ENCODE measurements at regions of chr21 and their contacts with region 1.

Region 1: GRCh38 chr21:39022863-39023693 is 160.2 kb downstream of the PSMG1 start:
- DNase-seq: no peak
- H3K4me3 ChIP-seq: no peak overlapping the region
- H3K27ac ChIP-seq: no peak overlapping the region
- H3K4me1 ChIP-seq: peaks cover 0 to 12% (median 7%) of the 10 kb centered on the region in 4 experiments; a peak in 5 of 7 replicates
- H3K27me3 ChIP-seq: no peaks in the 10 kb centered on the region
- CTCF ChIP-seq: peak; percentile 28 to 62 (median 38); a peak in 3 of 4 replicates
- EP300 ChIP-seq: no peak
- POLR2A ChIP-seq: no peak
- RAD21 ChIP-seq: peak; percentile 37 to 69

Region 2: GRCh38 chr21:38989745-38990423 is 33.2 kb before region 1 on chr21:
- CTCF ChIA-PET with region 1: interaction called, 11 read pairs
- POLR2A ChIA-PET with region 1: interaction called, 3 read pairs
- DNase-seq: no peak
- H3K4me3 ChIP-seq: no peak overlapping the region
- H3K27ac ChIP-seq: no peak overlapping the region
- H3K4me1 ChIP-seq: peaks cover 7 to 29% (median 24%) of the 10 kb centered on the region in 4 experiments
- H3K27me3 ChIP-seq: no peaks in the 10 kb centered on the region
- CTCF ChIP-seq: no peak
- EP300 ChIP-seq: no peak
- POLR2A ChIP-seq: no peak
- RAD21 ChIP-seq: no peak

Region 3: GRCh38 chr21:39010640-39011404 is 12.3 kb before region 1 on chr21:
- CTCF ChIA-PET with region 1: interaction called, 23 read pairs
- POLR2A ChIA-PET with region 1: interaction called, 3 read pairs
- DNase-seq: no peak
- H3K4me3 ChIP-seq: no peak overlapping the region
- H3K27ac ChIP-seq: no peak overlapping the region
- H3K4me1 ChIP-seq: peaks cover 0 to 4% (median 1%) of the 10 kb centered on the region in 4 experiments; a peak in 3 of 7 replicates
- H3K27me3 ChIP-seq: no peaks in the 10 kb centered on the region; a peak in 1 of 7 replicates
- CTCF ChIP-seq: no peak
- EP300 ChIP-seq: no peak
- POLR2A ChIP-seq: no peak
- RAD21 ChIP-seq: no peak

Region 4: GRCh38 chr21:39037807-39038405 is 14.8 kb after region 1 on chr21:
- CTCF ChIA-PET with region 1: interaction called, 10 read pairs
- POLR2A ChIA-PET with region 1: no interaction called
- DNase-seq: peak in 1 of 2 experiments; percentile 78
- H3K4me3 ChIP-seq: no peak overlapping the region
- H3K27ac ChIP-seq: no peak overlapping the region
- H3K4me1 ChIP-seq: peaks cover 0 to 4% (median 2%) of the 10 kb centered on the region in 4 experiments; a peak in 4 of 7 replicates
- H3K27me3 ChIP-seq: no peaks in the 10 kb centered on the region; a peak in 1 of 7 replicates
- CTCF ChIP-seq: peak; percentile 60 to 69 (median 61)
- EP300 ChIP-seq: no peak
- POLR2A ChIP-seq: no peak
- RAD21 ChIP-seq: peak; percentile 56 to 73